GM12878 (cell line): ENCODE measurements at regions of chr15 and their contacts with region 1.

Region 1: DNA sequence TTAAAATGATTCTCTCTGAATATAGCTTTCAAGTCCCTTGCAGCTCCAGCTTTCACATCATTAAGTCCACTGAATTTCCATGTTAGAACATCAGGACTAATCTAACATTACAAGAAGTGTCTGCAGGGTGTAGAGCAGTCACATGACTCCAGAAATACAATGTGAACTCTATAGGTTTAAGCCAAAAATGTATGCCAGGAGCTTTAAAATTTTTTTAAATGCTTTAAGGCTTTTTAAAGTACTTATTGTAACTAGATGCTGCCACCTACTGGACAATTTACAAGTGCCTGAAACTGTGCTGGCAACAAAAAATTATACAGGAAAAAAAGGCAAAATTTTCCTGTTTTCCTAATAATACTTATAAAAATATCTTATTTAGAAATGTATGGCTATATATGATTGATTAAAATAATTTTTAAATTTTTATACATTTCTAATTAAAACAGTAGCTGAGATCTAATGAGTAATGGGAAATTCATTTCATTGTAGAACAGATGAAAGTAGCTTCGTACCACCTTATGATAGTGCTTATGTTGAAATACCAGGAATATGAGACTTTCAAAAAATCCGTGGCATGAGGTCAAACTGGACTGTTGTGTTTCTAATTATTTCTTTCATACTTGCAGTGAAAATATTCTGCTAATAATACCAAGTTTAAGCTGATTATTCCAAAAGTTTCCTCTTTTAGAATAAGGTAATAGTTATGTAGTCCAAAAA is 25.7 kb downstream of the FSIP1 start:
- DNase-seq: no peak
- ATAC-seq: peak; percentile 50; the same call in 1 of the 3 replicates
- H3K4me3 ChIP-seq: no peak overlapping the region
- H3K27ac ChIP-seq: no peak overlapping the region
- H3K4me1 ChIP-seq: no peaks in the 10 kb centered on the region
- H3K27me3 ChIP-seq: no peaks in the 10 kb centered on the region
- CTCF ChIP-seq: peak; percentile 51 to 67 (median 57)
- EP300 ChIP-seq: no peak
- POLR2A ChIP-seq: no peak
- RAD21 ChIP-seq: peak; percentile 76

Region 2: GRCh38 chr15:39125904-39126303 is 631.1 kb before region 1 on chr15:
- CTCF ChIA-PET with region 1: interaction called, 21 read pairs
- POLR2A ChIA-PET with region 1: no interaction called
- RAD21 ChIA-PET with region 1: interaction called, 6 read pairs
- SMC1A ChIA-PET with region 1: interaction called, 3 read pairs
- in situ Hi-C with region 1: no loop called
- intact Hi-C with region 1: no loop called
- DNase-seq: no peak
- ATAC-seq: peak; percentile 63
- H3K4me3 ChIP-seq: no peak overlapping the region
- H3K27ac ChIP-seq: no peak overlapping the region
- H3K4me1 ChIP-seq: no peaks in the 10 kb centered on the region
- H3K27me3 ChIP-seq: no peaks in the 10 kb centered on the region
- CTCF ChIP-seq: peak; percentile 64 to 73 (median 66)
- EP300 ChIP-seq: no peak
- POLR2A ChIP-seq: no peak
- RAD21 ChIP-seq: peak; percentile 70

Region 3: GRCh38 chr15:39594056-39594763 is 162.8 kb before region 1 on chr15:
- CTCF ChIA-PET with region 1: interaction called, 31 read pairs
- POLR2A ChIA-PET with region 1: no interaction called
- RAD21 ChIA-PET with region 1: interaction called, 17 read pairs
- SMC1A ChIA-PET with region 1: interaction called, 26 read pairs
- in situ Hi-C with region 1: no loop called
- intact Hi-C with region 1: no loop called
- DNase-seq: no peak
- ATAC-seq: peak; percentile 56
- H3K4me3 ChIP-seq: no peak overlapping the region
- H3K27ac ChIP-seq: no peak overlapping the region
- H3K4me1 ChIP-seq: no peaks in the 10 kb centered on the region
- H3K27me3 ChIP-seq: no peaks in the 10 kb centered on the region
- CTCF ChIP-seq: peak in 2 of 3 experiments; percentile 23 to 41; a peak in 2 of 6 replicates
- EP300 ChIP-seq: no peak
- POLR2A ChIP-seq: no peak
- RAD21 ChIP-seq: peak; percentile 21; the same call in 1 of the 2 replicates

Region 4: GRCh38 chr15:39680868-39681267 is 76.1 kb before region 1 on chr15:
- CTCF ChIA-PET with region 1: interaction called, 400 read pairs
- POLR2A ChIA-PET with region 1: no interaction called
- RAD21 ChIA-PET with region 1: interaction called, 137 read pairs
- SMC1A ChIA-PET with region 1: interaction called, 220 read pairs
- in situ Hi-C with region 1: no loop called
- intact Hi-C with region 1: loop called (anchors 1 kb)
- DNase-seq: no peak
- ATAC-seq: no peak
- H3K4me3 ChIP-seq: no peak overlapping the region
- H3K27ac ChIP-seq: no peak overlapping the region
- H3K4me1 ChIP-seq: no peaks in the 10 kb centered on the region
- H3K27me3 ChIP-seq: no peaks in the 10 kb centered on the region
- CTCF ChIP-seq: no peak
- EP300 ChIP-seq: no peak
- POLR2A ChIP-seq: no peak
- RAD21 ChIP-seq: no peak

Region 5: DNA sequence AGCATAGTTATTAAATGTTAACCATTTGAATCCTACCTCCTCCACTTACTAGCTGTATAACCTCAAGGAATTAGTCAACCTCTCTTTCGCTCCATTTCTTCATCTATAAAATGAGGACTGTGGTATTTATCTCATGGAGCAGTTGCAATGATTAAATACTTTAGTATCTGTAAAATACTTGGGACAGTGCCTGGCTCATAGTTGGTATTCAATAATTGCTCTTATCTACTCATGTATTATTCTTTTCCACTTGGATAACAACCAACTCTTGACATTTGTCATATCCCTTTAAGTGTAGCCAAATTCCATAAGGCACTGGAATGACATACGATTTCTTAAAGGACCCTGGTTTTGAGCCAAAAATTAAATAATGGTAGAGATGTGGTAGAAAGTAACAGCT is 46.3 kb before region 1 on chr15:
- CTCF ChIA-PET with region 1: interaction called, 19 read pairs
- POLR2A ChIA-PET with region 1: no interaction called
- RAD21 ChIA-PET with region 1: interaction called, 6 read pairs
- SMC1A ChIA-PET with region 1: interaction called, 16 read pairs
- in situ Hi-C with region 1: no loop called
- intact Hi-C with region 1: no loop called
- DNase-seq: no peak
- ATAC-seq: no peak
- H3K4me3 ChIP-seq: no peak overlapping the region
- H3K27ac ChIP-seq: no peak overlapping the region
- H3K4me1 ChIP-seq: no peaks in the 10 kb centered on the region
- H3K27me3 ChIP-seq: no peaks in the 10 kb centered on the region
- CTCF ChIP-seq: no peak
- EP300 ChIP-seq: no peak
- POLR2A ChIP-seq: no peak
- RAD21 ChIP-seq: no peak

Region 6: DNA sequence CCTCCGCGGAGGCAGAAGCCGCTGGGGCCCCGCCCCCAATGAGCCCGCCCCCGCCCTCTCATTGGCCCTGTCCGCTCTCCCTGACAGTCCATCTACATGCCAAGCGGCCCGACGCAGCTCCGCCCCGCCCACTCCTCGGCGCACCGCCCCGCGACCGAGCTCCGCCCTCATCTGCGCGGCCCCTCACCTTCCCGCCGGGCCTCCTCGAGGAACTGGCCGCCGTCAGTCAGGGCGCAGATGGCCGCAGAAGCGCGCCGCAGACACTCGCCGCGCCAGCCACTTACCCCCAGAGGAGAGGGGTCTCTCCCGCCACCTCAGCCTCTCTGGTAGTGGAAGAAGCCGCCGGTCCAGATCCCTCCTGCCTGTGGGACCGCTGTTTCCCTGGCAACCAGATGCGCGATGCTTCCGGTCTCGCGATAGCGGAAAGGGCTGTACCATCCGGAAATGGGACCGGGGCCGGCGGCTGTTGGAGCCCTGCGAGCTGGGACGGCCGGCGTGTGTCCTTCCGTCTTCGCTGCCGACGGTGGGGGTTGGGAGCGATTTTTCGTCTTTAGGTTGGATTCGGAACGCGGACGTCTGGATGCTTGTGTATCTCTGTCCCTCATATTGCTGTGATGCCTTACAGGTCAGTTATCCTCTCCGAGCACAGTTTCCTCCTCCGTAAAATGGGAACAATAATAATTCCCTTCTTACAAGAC is 25.6 kb after region 1 on chr15 and contains the start of gene FSIP1:
- CTCF ChIA-PET with region 1: interaction called, 23 read pairs
- POLR2A ChIA-PET with region 1: no interaction called
- RAD21 ChIA-PET with region 1: interaction called, 12 read pairs
- SMC1A ChIA-PET with region 1: interaction called, 8 read pairs
- in situ Hi-C with region 1: no loop called
- intact Hi-C with region 1: no loop called
- DNase-seq: peak; percentile 86
- ATAC-seq: peak; percentile 98
- H3K4me3 ChIP-seq: peak within 1 kb of the TSS; percentile 97
- H3K27ac ChIP-seq: peak within 1 kb of the TSS; percentile 93
- H3K4me1 ChIP-seq: peaks cover 7% of the 10 kb centered on the region
- H3K27me3 ChIP-seq: no peaks in the 10 kb centered on the region
- CTCF ChIP-seq: no peak
- EP300 ChIP-seq: peak in 1 of 2 experiments; percentile 27; a peak in 1 of 4 replicates
- POLR2A ChIP-seq: peak; percentile 93
- RAD21 ChIP-seq: no peak
- polyA plus RNA-seq, gene FSIP1: 0.15 to 0.27 TPM

Region 7: DNA sequence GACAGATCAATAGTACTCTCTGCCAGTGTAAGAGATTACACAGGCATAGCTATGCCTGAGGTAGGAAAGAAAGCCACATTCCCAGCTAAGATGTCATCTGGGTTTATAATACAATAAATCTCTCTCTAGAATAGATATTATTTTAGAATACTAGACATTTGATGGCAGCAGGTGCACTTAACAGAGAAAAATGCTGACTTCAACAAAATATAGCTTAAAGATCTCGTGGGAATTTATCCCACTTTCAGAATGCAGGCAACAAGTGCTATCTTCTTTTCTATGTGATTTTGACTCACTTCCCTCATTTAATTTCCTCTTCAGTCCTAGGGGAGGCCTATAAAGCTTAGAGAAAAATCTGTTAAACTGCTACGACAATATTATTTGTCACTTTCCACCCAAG is 86.6 kb after region 1 on chr15:
- CTCF ChIA-PET with region 1: no interaction called
- POLR2A ChIA-PET with region 1: no interaction called
- RAD21 ChIA-PET with region 1: no interaction called
- SMC1A ChIA-PET with region 1: no interaction called
- in situ Hi-C with region 1: no loop called
- intact Hi-C with region 1: no loop called
- DNase-seq: no peak
- ATAC-seq: no peak
- H3K4me3 ChIP-seq: no peak overlapping the region
- H3K27ac ChIP-seq: no peak overlapping the region
- H3K4me1 ChIP-seq: no peaks in the 10 kb centered on the region
- H3K27me3 ChIP-seq: no peaks in the 10 kb centered on the region
- CTCF ChIP-seq: no peak
- EP300 ChIP-seq: no peak
- POLR2A ChIP-seq: no peak
- RAD21 ChIP-seq: no peak